CD8-positive, alpha-beta T cell (primary cell): ENCODE measurements at regions of chr9 and their contacts with region 1.

Region 1: GRCh38 chr9:7976167-7976755 is 176.7 kb upstream of the DMAC1 start:
- DNase-seq: peak; percentile 18 to 94 (median 56)
- ATAC-seq: peak; percentile 98
- H3K4me3 ChIP-seq: no peak overlapping the region
- H3K4me3 Mint-ChIP-seq: peak overlapping the region; percentile 54
- H3K27ac ChIP-seq: peak overlapping the region in 1 of 2 experiments; percentile 64
- H3K27ac Mint-ChIP-seq: peak overlapping the region; percentile 86
- H3K4me1 ChIP-seq: peaks cover 53% of the 10 kb centered on the region
- H3K4me1 Mint-ChIP-seq: peaks cover 61% of the 10 kb centered on the region
- H3K27me3 ChIP-seq: no peaks in the 10 kb centered on the region
- H3K27me3 Mint-ChIP-seq: no peaks in the 10 kb centered on the region
- CTCF ChIP-seq: no peak

Region 2: DNA sequence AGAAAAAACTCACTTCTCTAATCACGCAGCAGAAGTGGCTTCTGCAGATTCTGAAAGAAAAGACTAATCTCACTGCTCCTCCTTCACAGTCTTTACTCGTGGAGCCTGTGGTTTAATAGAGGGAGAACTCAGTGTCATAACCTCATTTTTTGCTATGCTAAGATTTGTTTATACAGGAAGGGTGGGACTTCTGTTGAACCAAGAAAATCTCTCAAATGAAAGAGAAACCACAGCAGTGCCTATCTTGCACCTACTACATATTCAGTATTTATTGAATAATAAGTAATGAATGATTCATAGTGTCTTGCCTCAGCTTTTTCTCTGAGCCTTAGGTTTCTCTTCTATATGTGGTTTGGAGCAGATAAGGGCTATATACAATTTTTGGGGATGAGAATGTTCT is 40.6 kb before region 1 on chr9:
- CTCF ChIA-PET with region 1: interaction called, 3 read pairs
- POLR2A ChIA-PET with region 1: interaction called, 3 read pairs
- intact Hi-C with region 1: loop called (anchors 1 to 2 kb)
- DNase-seq: peak in 3 of 9 experiments; percentile 9 to 79 (median 59)
- ATAC-seq: peak; percentile 97
- H3K4me3 ChIP-seq: peak overlapping the region in 1 of 2 experiments; percentile 7
- H3K4me3 Mint-ChIP-seq: peak overlapping the region; percentile 69
- H3K27ac ChIP-seq: peak overlapping the region; percentile 34 to 51
- H3K27ac Mint-ChIP-seq: peak overlapping the region; percentile 95
- H3K4me1 ChIP-seq: peaks cover 25% of the 10 kb centered on the region
- H3K4me1 Mint-ChIP-seq: peaks cover 35% of the 10 kb centered on the region
- H3K27me3 ChIP-seq: no peaks in the 10 kb centered on the region
- H3K27me3 Mint-ChIP-seq: no peaks in the 10 kb centered on the region
- CTCF ChIP-seq: no peak

Region 3: GRCh38 chr9:7963026-7963425 is 13.2 kb before region 1 on chr9:
- CTCF ChIA-PET with region 1: no interaction called
- POLR2A ChIA-PET with region 1: interaction called, 4 read pairs
- intact Hi-C with region 1: loop called in 1 of 2 experiments (anchors 1 kb)
- DNase-seq: no peak
- ATAC-seq: no peak
- H3K4me3 ChIP-seq: no peak overlapping the region
- H3K4me3 Mint-ChIP-seq: no peak overlapping the region
- H3K27ac ChIP-seq: no peak overlapping the region
- H3K27ac Mint-ChIP-seq: no peak overlapping the region
- H3K4me1 ChIP-seq: peaks cover 10% of the 10 kb centered on the region
- H3K4me1 Mint-ChIP-seq: peaks cover 20% of the 10 kb centered on the region
- H3K27me3 ChIP-seq: no peaks in the 10 kb centered on the region
- H3K27me3 Mint-ChIP-seq: no peaks in the 10 kb centered on the region
- CTCF ChIP-seq: no peak

Region 4: GRCh38 chr9:8011974-8012373 is 35.7 kb after region 1 on chr9:
- CTCF ChIA-PET with region 1: no interaction called
- POLR2A ChIA-PET with region 1: no interaction called
- intact Hi-C with region 1: no loop called
- DNase-seq: no peak
- ATAC-seq: no peak
- H3K4me3 ChIP-seq: no peak overlapping the region
- H3K4me3 Mint-ChIP-seq: no peak overlapping the region
- H3K27ac ChIP-seq: no peak overlapping the region
- H3K27ac Mint-ChIP-seq: no peak overlapping the region
- H3K4me1 ChIP-seq: no peaks in the 10 kb centered on the region
- H3K4me1 Mint-ChIP-seq: no peaks in the 10 kb centered on the region
- H3K27me3 ChIP-seq: no peaks in the 10 kb centered on the region
- H3K27me3 Mint-ChIP-seq: no peaks in the 10 kb centered on the region
- CTCF ChIP-seq: no peak